Lower lobe of right lung (tissue), 2 donors: ENCODE measurements at regions of chr1 and their contacts with region 1.

Region 1: DNA sequence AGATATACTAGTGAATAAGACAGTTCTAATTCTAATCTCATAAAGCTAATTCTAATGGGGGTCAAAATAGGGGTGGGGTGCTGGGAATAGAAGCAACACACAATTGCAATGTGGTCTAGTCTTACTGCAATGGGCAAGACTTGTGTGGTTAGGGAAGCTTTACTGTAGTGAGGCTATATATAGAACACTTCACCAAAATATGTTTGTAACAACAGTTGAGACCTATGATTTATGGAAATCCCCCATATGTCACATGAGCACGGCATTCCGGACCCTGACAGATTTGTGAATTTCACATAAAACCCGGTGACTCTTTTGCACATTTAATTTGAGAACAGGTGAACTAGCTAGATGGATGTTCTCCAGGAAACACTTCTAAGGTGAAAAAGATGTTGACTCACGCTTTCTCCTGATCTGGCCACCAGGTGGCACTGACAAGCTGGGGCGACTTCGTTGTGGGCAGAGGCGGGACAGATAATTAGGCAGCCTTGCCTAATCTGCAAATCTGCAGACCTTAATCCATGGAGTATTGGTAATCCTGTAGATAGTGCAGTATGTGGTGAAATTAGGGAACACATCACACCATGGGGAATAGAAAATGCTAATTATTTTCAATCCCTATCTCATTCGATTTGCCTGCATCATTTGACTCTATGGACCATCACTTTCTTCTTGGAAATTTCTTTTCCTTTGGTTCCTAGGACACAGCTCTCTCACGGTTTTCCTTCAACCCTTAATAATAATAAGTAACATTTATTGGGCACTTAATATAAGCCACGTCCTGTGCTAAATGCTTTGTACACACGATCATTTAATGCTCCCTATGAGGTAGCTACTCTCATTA is 37.7 kb downstream of the KIAA0040 start:
- DNase-seq: peak; percentile 76
- ATAC-seq: peak; percentile 71 to 73
- H3K4me3 ChIP-seq: no peak overlapping the region
- H3K27ac ChIP-seq: no peak overlapping the region
- H3K4me1 ChIP-seq: peaks cover 14% of the 10 kb centered on the region
- H3K27me3 ChIP-seq: no peaks in the 10 kb centered on the region
- CTCF ChIP-seq: peak; percentile 92

Region 2: DNA sequence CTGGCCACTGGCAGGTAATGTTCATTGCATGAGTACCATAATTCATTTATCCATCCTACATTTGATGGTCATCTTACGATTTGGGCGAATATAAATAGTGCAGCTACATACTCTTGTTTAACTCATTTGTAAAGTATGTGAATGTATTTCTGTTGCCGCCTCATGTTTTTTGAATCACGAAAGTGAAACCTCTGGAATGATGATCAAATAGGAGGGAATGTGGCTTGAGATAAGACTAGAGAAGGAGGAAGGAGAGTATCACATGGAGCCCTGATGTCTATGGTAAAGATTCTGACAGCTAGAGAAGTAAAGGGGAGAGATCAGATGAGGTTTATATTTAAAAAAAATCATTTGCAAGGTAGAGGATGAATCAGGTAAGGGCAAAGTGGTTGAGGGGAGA is 139.6 kb before region 1 on chr1:
- intact Hi-C with region 1: no loop called
- DNase-seq: no peak
- ATAC-seq: peak in 1 of 2 donors; percentile 28
- H3K4me3 ChIP-seq: no peak overlapping the region
- H3K27ac ChIP-seq: no peak overlapping the region
- H3K4me1 ChIP-seq: no peaks in the 10 kb centered on the region
- H3K27me3 ChIP-seq: no peaks in the 10 kb centered on the region
- CTCF ChIP-seq: no peak

Region 3: GRCh38 chr1:175221666-175222175 is 66.9 kb after region 1 on chr1:
- intact Hi-C with region 1: loop called (anchors 5 kb)
- DNase-seq: peak; percentile 53
- ATAC-seq: peak; percentile 83 to 89
- H3K4me3 ChIP-seq: no peak overlapping the region
- H3K27ac ChIP-seq: peak overlapping the region; percentile 61
- H3K4me1 ChIP-seq: peaks cover 31% of the 10 kb centered on the region
- H3K27me3 ChIP-seq: no peaks in the 10 kb centered on the region
- CTCF ChIP-seq: peak; percentile 44

Region 4: DNA sequence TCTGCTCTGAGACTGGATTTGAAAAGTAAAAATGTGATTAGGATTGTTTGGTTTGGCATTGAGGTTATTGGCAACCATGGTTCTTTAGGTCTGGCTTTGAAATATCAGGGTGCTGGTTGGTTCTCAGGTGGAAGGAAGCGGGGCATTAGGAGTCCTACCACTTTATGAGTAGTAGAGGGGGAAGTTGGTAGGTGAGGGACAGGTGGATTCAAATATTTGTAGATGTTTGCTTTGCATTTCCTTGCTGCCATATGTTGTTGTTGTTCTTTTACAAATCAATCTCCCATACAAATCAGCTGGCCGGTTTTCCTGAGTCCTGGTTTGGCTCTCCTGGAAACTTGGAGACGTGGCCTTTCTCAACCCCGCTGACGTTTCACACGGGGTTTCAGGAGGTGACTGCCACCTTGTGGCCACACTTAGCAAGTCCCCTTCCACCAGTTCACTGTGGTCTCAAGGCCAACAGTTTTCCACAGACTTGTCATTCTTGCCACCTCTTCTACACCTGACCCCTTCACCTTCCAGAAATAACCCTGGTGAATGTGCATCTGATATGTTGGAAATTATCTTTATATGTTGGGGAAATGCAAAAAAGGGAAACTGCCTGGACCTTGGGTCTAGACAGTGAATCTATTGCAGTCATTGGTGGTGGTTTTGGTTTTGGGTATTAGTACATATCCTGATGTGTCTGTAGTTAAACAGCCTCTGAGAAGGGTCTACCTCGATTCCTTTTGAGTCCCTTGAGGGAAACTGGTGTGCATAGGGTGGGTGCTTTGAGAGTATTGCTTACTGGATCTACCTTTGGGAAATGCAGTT is 164.8 kb after region 1 on chr1:
- intact Hi-C with region 1: loop called (anchors 5 kb)
- DNase-seq: peak; percentile 73
- ATAC-seq: peak; percentile 90 to 92
- H3K4me3 ChIP-seq: no peak overlapping the region
- H3K27ac ChIP-seq: peak overlapping the region; percentile 25
- H3K4me1 ChIP-seq: peaks cover 21% of the 10 kb centered on the region
- H3K27me3 ChIP-seq: no peaks in the 10 kb centered on the region
- CTCF ChIP-seq: peak; percentile 84